ENCODE measurements at regions of chr1 and their contacts with region 1.

Region 1: DNA sequence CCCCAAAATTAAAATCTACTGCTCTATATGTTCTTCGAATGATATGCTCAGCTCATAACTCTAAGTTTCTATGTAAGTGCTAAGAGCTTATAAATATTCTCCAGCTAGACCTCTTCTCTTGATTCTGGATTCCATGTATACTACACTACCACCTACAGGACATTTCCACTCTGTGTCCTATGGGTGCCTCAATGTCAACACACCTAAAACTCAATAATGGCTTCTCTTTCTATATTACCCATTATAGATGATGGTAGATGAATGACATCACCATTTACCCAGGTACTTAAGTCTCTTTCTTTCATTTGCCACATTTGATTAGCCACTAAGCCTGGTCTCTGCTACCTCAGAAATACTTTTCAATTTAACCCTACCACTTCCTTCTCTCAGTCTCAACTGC is 41.3 kb downstream of the TBX19 start:
- DNase-seq: peak in 3 of 4 experiments; percentile 32 to 57 (median 46)
- ATAC-seq: peak; percentile 90
- H3K4me3 ChIP-seq: no peak overlapping the region
- H3K27ac ChIP-seq: no peak overlapping the region
- H3K4me1 ChIP-seq: peaks cover 0 to 9% of the 10 kb centered on the region in 2 experiments; a peak in 3 of 5 replicates
- H3K27me3 ChIP-seq: no peaks in the 10 kb centered on the region
- CTCF ChIP-seq: peak; percentile 42 to 77 (median 62); a peak in 5 of 6 replicates
- EP300 ChIP-seq: no peak
- POLR2A ChIP-seq: no peak
- RAD21 ChIP-seq: peak; percentile 60 to 86

Region 2: GRCh38 chr1:168082008-168082876 is 239.7 kb before region 1 on chr1:
- CTCF ChIA-PET with region 1: interaction called, 7 read pairs
- POLR2A ChIA-PET with region 1: no interaction called
- in situ Hi-C with region 1: no loop called
- intact Hi-C with region 1: loop called (anchors 2 kb)
- DNase-seq: peak; percentile 78 to 87 (median 81)
- ATAC-seq: peak; percentile 92
- H3K4me3 ChIP-seq: no peak overlapping the region
- H3K27ac ChIP-seq: no peak overlapping the region; the same call in 2 of the 3 replicates
- H3K4me1 ChIP-seq: peaks cover 8 to 9% of the 10 kb centered on the region in 2 experiments; a peak in 4 of 5 replicates
- H3K27me3 ChIP-seq: no peaks in the 10 kb centered on the region
- CTCF ChIP-seq: peak; percentile 90 to 98 (median 96)
- EP300 ChIP-seq: no peak
- POLR2A ChIP-seq: no peak
- RAD21 ChIP-seq: peak; percentile 62 to 89

Region 3: DNA sequence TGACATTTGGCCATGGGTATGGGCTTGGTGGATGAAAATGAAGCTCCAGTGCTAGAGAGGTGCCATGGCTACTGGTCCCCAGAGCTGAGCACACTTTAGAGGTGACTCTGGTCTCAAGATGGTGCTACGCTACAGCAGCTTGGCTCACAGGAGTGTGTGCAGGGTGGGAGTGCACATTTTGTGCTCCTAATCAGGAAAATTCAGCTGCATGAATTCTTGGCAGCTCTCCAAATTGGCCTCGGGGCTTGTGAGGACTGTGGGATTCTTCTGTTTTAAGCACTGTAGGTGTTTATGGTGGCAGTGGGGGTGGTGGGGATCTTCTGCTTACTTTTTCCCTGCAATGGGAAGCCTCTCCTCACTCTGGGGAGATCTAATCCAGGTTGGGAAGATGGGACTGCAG is 160.5 kb before region 1 on chr1:
- CTCF ChIA-PET with region 1: no interaction called
- POLR2A ChIA-PET with region 1: no interaction called
- in situ Hi-C with region 1: no loop called
- intact Hi-C with region 1: loop called (anchors 1 kb)
- DNase-seq: peak in 3 of 4 experiments; percentile 34 to 95 (median 76)
- ATAC-seq: peak; percentile 98
- H3K4me3 ChIP-seq: no peak overlapping the region
- H3K27ac ChIP-seq: no peak overlapping the region; the same call in 2 of the 3 replicates
- H3K4me1 ChIP-seq: peaks cover 9% of the 10 kb centered on the region in 2 experiments; a peak in 4 of 5 replicates
- H3K27me3 ChIP-seq: no peaks in the 10 kb centered on the region
- CTCF ChIP-seq: peak; percentile 39 to 68 (median 53); a peak in 5 of 6 replicates
- EP300 ChIP-seq: peak; percentile 80
- POLR2A ChIP-seq: no peak
- RAD21 ChIP-seq: peak in 1 of 2 experiments; percentile 64; a peak in 2 of 4 replicates

Region 4: DNA sequence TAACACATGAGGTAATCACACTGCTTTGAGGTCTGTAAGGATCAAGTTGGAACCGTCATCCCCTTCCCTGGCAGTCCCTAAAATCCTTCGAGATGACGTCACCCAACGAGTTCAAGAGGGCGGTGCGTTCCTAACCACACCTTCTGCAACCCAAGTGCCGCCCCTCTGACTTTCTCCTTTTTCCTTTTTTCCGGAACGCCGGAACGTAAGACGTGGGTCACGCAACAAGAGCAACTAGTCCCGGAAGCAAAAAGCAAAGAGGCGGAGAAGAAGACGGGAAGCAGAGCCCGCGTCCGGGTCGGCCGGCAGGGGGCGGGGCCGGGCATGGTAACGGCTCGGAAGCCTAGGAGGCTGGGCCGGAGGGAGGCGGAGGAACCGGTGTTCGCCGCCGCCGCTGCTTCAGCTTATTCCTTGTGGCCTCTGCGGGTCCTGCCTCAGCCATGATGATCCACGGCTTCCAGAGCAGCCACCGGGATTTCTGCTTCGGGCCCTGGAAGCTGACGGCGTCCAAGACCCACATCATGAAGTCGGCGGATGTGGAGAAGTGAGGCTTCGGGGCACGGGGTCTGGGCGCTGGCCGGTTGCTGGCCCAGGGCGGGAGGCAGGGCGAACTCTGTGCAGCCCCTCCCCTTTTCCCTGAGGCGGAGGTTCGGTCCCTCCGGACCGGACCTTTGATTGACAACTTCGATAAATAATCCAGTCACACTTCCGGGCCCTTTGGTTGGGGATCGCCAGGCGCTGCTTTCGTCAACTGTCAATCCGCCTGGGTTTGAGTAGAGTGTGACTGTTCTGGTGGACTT is 143.1 kb before region 1 on chr1 and contains the start of gene TIPRL:
- CTCF ChIA-PET with region 1: interaction called, 3 read pairs
- POLR2A ChIA-PET with region 1: no interaction called
- in situ Hi-C with region 1: no loop called
- intact Hi-C with region 1: loop called (anchors 1 kb)
- DNase-seq: peak; percentile 95 to 99 (median 96)
- ATAC-seq: peak; percentile 97
- H3K4me3 ChIP-seq: peak within 1 kb of the TSS; percentile 62
- H3K27ac ChIP-seq: peak within 1 kb of the TSS; percentile 84
- H3K4me1 ChIP-seq: peaks cover 6 to 11% of the 10 kb centered on the region in 2 experiments; a peak in 4 of 5 replicates
- H3K27me3 ChIP-seq: no peaks in the 10 kb centered on the region
- CTCF ChIP-seq: peak; percentile 74 to 87 (median 82)
- EP300 ChIP-seq: peak; percentile 52
- POLR2A ChIP-seq: peak; percentile 96
- RAD21 ChIP-seq: peak; percentile 58 to 60
- polyA plus RNA-seq, gene TIPRL: 87.0 to 90.2 TPM

Region 5: GRCh38 chr1:168234846-168235547 is 86.9 kb before region 1 on chr1:
- CTCF ChIA-PET with region 1: interaction called, 4 read pairs
- POLR2A ChIA-PET with region 1: no interaction called
- in situ Hi-C with region 1: no loop called
- intact Hi-C with region 1: loop called (anchors 1 kb)
- DNase-seq: peak; percentile 67 to 78 (median 74)
- ATAC-seq: peak; percentile 99
- H3K4me3 ChIP-seq: no peak overlapping the region
- H3K27ac ChIP-seq: no peak overlapping the region
- H3K4me1 ChIP-seq: no peaks in the 10 kb centered on the region
- H3K27me3 ChIP-seq: no peaks in the 10 kb centered on the region
- CTCF ChIP-seq: peak; percentile 86 to 89 (median 88)
- EP300 ChIP-seq: no peak
- POLR2A ChIP-seq: no peak
- RAD21 ChIP-seq: peak; percentile 78 to 92